GM12878 (cell line): ENCODE measurements at regions of chr11 and their contacts with region 1.

Region 1: GRCh38 chr11:72722050-72722748 is 30.0 kb downstream of the ARAP1 start:
- DNase-seq: no peak
- ATAC-seq: peak; percentile 93
- H3K4me3 ChIP-seq: peak overlapping the region; percentile 85
- H3K27ac ChIP-seq: peak overlapping the region; percentile 92
- H3K4me1 ChIP-seq: peaks cover 49% of the 10 kb centered on the region
- H3K27me3 ChIP-seq: no peaks in the 10 kb centered on the region
- CTCF ChIP-seq: no peak
- EP300 ChIP-seq: no peak
- POLR2A ChIP-seq: peak; percentile 72
- RAD21 ChIP-seq: no peak

Region 2: GRCh38 chr11:72696866-72697700 is 25.1 kb before region 1 on chr11:
- CTCF ChIA-PET with region 1: no interaction called
- POLR2A ChIA-PET with region 1: no interaction called
- RAD21 ChIA-PET with region 1: no interaction called
- SMC1A ChIA-PET with region 1: no interaction called
- in situ Hi-C with region 1: no loop called
- intact Hi-C with region 1: no loop called
- DNase-seq: no peak
- ATAC-seq: no peak
- H3K4me3 ChIP-seq: no peak overlapping the region
- H3K27ac ChIP-seq: no peak overlapping the region
- H3K4me1 ChIP-seq: peaks cover 8% of the 10 kb centered on the region
- H3K27me3 ChIP-seq: no peaks in the 10 kb centered on the region
- CTCF ChIP-seq: no peak
- EP300 ChIP-seq: no peak
- POLR2A ChIP-seq: peak; percentile 50
- RAD21 ChIP-seq: no peak

Region 3: GRCh38 chr11:72736452-72737069 is 14.4 kb after region 1 on chr11:
- CTCF ChIA-PET with region 1: interaction called, 89 read pairs
- POLR2A ChIA-PET with region 1: interaction called, 7 read pairs
- RAD21 ChIA-PET with region 1: interaction called, 18 read pairs
- SMC1A ChIA-PET with region 1: interaction called, 41 read pairs
- in situ Hi-C with region 1: no loop called
- intact Hi-C with region 1: no loop called
- DNase-seq: no peak
- ATAC-seq: peak; percentile 26
- H3K4me3 ChIP-seq: peak overlapping the region; percentile 25
- H3K27ac ChIP-seq: peak overlapping the region; percentile 72
- H3K4me1 ChIP-seq: peaks cover 54% of the 10 kb centered on the region
- H3K27me3 ChIP-seq: no peaks in the 10 kb centered on the region
- CTCF ChIP-seq: no peak
- EP300 ChIP-seq: no peak
- POLR2A ChIP-seq: no peak
- RAD21 ChIP-seq: no peak

Region 4: DNA sequence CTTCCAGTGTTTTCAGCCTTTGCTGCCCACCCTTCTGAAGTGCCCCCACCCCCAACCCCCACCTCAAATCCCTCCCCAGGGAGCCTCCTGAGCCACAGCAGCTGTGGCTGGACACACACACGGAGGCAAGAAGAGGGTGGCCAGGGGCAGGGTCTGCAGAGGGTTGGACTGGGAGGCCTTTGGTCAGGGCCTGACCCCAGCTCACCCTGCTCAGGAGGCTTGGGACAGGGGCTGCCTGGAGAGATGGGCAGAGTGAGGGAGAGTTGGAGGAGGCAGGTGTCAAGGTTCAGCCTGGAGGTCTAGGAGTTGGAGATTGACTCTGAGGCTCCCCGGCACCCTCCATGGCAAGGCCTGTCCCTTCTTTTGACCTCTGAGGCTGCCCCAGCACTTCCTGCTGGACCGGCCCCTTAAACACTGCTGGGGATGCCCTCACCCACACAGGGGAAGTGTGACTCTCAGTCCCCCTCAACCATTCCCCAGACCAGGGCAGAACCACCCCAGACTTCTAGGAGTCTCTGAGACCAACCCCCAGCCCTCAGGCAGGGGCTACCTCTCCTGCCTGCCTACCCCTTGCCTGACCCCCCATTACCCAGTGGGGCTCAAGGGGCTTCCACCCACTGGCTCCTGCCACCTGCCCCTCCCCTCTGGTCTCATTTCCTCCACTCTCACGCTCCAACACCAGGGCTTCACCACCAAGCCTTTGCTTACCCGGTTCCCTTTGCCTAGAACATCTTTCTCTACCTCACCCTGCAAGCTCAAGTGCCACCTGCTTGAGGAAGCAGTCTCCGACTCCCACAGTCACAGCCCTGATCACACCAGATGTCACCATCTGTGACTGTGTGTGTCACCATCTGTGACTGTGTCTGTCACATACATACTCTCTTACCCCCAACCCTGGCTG is 21.4 kb after region 1 on chr11:
- CTCF ChIA-PET with region 1: interaction called, 89 read pairs
- POLR2A ChIA-PET with region 1: interaction called, 4 read pairs
- RAD21 ChIA-PET with region 1: interaction called, 18 read pairs
- SMC1A ChIA-PET with region 1: interaction called, 41 read pairs
- in situ Hi-C with region 1: no loop called
- intact Hi-C with region 1: no loop called
- DNase-seq: no peak
- ATAC-seq: peak; percentile 53
- H3K4me3 ChIP-seq: peak overlapping the region; percentile 51; the same call in 1 of the 2 replicates
- H3K27ac ChIP-seq: peak overlapping the region; percentile 59
- H3K4me1 ChIP-seq: peaks cover 75% of the 10 kb centered on the region
- H3K27me3 ChIP-seq: no peaks in the 10 kb centered on the region
- CTCF ChIP-seq: no peak
- EP300 ChIP-seq: no peak
- POLR2A ChIP-seq: no peak
- RAD21 ChIP-seq: no peak

Region 5: DNA sequence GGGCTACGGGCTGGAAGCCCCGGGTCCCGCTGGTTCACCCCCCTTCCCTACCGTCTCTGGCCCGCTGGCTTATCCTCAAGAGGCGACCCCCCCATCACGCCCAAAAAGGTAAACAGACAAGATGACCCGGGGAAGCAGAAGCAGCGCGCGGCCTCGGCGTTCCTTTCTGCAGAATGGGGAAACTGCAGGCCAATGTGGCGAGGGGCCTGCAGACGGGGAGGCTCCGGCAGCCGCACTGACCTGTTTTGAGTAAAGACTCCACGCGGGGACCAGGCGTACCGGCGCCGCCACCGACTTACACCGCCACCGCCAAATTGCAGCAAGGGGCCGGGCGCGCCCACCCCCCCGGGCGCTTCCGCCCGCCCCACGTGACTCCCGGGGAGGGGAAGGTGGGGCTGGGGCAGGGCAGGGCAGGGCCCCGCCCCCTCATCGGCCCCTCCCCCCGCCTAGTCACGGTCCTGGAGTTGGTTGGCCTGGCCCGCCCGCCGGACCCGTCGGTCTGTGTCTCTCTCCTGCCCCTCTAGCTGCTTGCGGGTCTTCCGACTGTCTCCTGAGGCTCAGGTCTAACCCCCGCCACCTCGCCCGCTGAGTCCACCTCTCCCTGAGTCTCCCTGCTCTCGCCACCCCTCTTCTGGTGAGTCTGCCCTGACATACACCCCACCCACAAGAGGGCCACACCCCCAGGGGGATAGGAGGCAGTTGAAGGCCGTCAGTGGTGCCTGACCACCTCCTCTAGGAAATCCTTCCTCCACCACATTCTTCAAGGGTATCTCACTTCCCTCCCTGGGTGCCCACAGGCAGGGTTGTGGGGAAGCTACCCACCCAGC is 30.1 kb after region 1 on chr11 and contains the start of gene ARAP1:
- CTCF ChIA-PET with region 1: interaction called, 10 read pairs
- POLR2A ChIA-PET with region 1: interaction called, 3 read pairs
- RAD21 ChIA-PET with region 1: interaction called, 9 read pairs
- SMC1A ChIA-PET with region 1: interaction called, 8 read pairs
- in situ Hi-C with region 1: no loop called
- intact Hi-C with region 1: no loop called
- DNase-seq: no peak
- ATAC-seq: peak; percentile 83
- H3K4me3 ChIP-seq: peak within 1 kb of the TSS; percentile 99
- H3K27ac ChIP-seq: peak within 1 kb of the TSS; percentile 80
- H3K4me1 ChIP-seq: peaks cover 33% of the 10 kb centered on the region
- H3K27me3 ChIP-seq: no peaks in the 10 kb centered on the region
- CTCF ChIP-seq: 0 out of 6 replicates have a peak, but pooled peaks of 1 of the 3 experiments have one; percentile 5
- EP300 ChIP-seq: no peak
- POLR2A ChIP-seq: peak; percentile 74; the same call in 1 of the 2 replicates
- RAD21 ChIP-seq: no peak
- polyA plus RNA-seq, gene ARAP1: 0.55 to 0.85 TPM

Region 6: DNA sequence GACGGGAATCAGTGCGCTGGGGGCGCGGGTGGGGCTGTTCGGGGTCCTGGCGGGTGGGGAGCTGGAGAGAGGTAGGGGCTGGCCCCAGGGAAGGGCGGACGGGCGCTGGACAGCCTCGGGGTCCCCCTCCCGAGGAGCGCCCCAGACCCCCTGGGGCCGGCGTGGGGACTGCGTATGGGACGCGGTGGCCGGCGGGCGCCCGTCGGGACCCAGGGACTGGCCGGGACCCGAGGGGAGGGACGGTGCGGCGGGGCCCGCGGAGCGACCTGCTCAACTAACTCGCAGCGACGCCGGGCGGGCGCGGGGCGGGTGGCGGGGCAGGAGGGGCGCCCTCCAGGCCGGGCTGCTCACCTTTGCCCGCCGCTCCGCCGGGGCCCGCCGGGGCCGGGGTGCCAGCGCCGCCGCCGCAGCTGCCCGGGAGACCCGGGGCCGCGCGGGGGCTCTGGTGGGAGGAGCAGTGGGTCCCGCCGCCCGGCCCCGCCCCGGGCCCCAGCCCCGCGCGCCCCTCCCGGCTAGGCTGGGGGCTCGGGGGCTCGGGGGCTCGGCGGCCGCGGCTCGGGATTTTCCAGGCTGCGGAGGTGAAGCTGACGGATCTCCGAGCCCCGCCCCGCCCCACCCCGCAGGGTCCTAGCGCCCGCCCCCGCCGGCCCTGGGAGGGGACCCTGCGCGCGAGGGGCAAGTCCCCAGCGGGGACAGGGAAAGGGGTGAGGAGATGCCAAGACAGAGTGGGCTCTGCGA is 59.3 kb after region 1 on chr11:
- CTCF ChIA-PET with region 1: interaction called, 469 read pairs
- POLR2A ChIA-PET with region 1: interaction called, 9 read pairs
- RAD21 ChIA-PET with region 1: interaction called, 256 read pairs
- SMC1A ChIA-PET with region 1: interaction called, 8 read pairs
- in situ Hi-C with region 1: no loop called
- intact Hi-C with region 1: no loop called
- DNase-seq: no peak
- ATAC-seq: peak; percentile 76
- H3K4me3 ChIP-seq: peak overlapping the region; percentile 56
- H3K27ac ChIP-seq: no peak overlapping the region
- H3K4me1 ChIP-seq: peaks cover 11% of the 10 kb centered on the region
- H3K27me3 ChIP-seq: no peaks in the 10 kb centered on the region
- CTCF ChIP-seq: no peak
- EP300 ChIP-seq: no peak
- POLR2A ChIP-seq: no peak
- RAD21 ChIP-seq: no peak

Region 7: DNA sequence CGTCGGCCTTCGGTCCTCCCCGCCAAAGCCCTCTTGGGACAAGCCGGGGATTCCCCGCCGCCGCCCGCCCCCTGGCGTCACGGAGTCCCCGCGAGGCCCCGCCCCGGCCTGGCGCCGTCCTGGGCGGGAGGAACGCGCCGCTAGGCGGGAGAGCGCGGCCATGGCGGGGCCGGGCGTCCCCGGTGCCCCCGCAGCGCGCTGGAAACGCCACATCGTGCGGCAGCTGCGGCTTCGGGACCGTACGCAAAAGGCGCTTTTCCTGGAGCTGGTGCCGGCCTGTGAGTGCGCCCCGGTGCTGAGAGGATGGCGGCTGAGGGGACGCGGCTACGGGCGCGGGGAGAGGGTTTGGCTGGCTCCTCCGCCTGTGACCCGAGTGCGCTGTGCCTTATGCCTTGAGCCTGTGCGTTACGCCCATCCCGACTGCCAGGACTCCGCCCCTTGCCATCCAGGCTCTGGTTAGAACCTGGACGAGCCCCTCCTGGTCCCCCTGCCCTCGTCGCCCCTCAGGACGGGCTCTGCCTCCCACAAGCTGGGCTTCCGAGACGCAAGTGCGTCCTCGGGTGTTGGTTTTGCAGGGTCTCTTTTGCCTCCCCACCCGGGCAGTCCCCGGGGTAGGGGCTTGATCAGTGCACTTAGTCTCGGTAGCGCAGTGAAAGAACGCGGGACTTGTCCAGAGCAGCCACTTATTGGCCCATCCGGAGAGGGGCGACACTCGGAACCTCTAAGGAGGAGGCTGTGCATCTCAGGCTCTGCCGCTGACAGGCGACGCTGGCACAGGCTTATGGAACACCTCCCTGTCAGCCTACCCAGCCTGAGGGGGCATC is 92.3 kb after region 1 on chr11 and contains the start of gene ATG16L2:
- CTCF ChIA-PET with region 1: interaction called, 154 read pairs
- POLR2A ChIA-PET with region 1: interaction called, 6 read pairs
- RAD21 ChIA-PET with region 1: interaction called, 19 read pairs
- SMC1A ChIA-PET with region 1: interaction called, 10 read pairs
- in situ Hi-C with region 1: no loop called
- intact Hi-C with region 1: loop called (anchors 1 kb)
- DNase-seq: no peak
- ATAC-seq: peak; percentile 74
- H3K4me3 ChIP-seq: peak within 1 kb of the TSS; percentile 89
- H3K27ac ChIP-seq: peak within 1 kb of the TSS; percentile 98
- H3K4me1 ChIP-seq: peaks cover 7% of the 10 kb centered on the region; the same call in 1 of the 2 replicates
- H3K27me3 ChIP-seq: no peaks in the 10 kb centered on the region
- CTCF ChIP-seq: peak in 2 of 3 experiments; percentile 15 to 19; a peak in 1 of 6 replicates
- EP300 ChIP-seq: 0 out of 4 replicates have a peak, but pooled peaks of 1 of the 2 experiments have one; percentile 3
- POLR2A ChIP-seq: peak; percentile 81
- RAD21 ChIP-seq: 0 out of 2 replicates have a peak, but pooled peaks have one; percentile 20
- polyA plus RNA-seq, gene ATG16L2: 1.9 to 5.3 TPM

Region 8: DNA sequence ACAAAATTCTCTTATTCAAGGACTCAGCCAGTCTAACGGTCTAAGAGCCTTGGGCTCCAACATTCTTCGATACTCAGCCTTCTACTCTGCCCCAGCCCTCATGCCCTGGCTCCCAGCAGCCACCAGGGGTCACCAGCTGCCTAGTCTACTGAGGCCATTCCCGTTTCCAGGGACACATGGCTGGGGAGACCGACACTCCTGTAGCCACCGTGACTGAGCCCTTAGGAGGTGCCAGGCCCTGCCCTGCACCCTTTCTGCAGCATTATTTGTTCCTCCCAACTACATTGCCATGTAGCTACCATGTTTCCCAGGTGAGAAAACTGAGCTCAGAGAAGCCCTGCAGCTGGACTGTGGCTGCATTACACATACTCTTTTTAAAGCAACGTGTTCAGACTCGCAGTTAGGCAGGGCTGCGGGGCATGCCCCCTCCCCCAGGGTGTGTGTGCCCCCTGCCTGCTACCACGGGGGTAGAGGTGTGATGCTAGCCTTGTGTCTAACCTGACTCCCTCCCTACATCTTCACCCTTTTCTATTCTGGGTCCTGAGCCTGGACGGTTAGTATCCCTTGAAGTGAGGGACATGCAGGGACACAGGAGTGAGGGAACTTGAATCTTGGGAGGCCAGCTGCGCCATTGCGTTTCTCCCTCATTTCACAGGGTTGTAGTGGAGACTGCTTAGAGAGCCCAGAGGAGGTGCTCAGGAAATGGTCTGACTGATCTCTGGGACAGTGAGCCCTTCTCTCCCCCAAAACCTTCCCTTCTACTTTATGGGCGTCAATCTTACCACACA is 109.5 kb after region 1 on chr11:
- CTCF ChIA-PET with region 1: interaction called, 19 read pairs
- POLR2A ChIA-PET with region 1: no interaction called
- RAD21 ChIA-PET with region 1: interaction called, 9 read pairs
- SMC1A ChIA-PET with region 1: interaction called, 9 read pairs
- in situ Hi-C with region 1: no loop called
- intact Hi-C with region 1: no loop called
- DNase-seq: no peak
- ATAC-seq: peak; percentile 83
- H3K4me3 ChIP-seq: no peak overlapping the region
- H3K27ac ChIP-seq: no peak overlapping the region
- H3K4me1 ChIP-seq: peaks cover 8% of the 10 kb centered on the region
- H3K27me3 ChIP-seq: no peaks in the 10 kb centered on the region
- CTCF ChIP-seq: peak; percentile 77 to 85 (median 85); a peak in 5 of 6 replicates
- EP300 ChIP-seq: no peak
- POLR2A ChIP-seq: peak; percentile 69
- RAD21 ChIP-seq: peak; percentile 81